Heart right ventricle (tissue), 16 donors: ENCODE measurements at regions of chr17 and their contacts with region 1.

Region 1: DNA sequence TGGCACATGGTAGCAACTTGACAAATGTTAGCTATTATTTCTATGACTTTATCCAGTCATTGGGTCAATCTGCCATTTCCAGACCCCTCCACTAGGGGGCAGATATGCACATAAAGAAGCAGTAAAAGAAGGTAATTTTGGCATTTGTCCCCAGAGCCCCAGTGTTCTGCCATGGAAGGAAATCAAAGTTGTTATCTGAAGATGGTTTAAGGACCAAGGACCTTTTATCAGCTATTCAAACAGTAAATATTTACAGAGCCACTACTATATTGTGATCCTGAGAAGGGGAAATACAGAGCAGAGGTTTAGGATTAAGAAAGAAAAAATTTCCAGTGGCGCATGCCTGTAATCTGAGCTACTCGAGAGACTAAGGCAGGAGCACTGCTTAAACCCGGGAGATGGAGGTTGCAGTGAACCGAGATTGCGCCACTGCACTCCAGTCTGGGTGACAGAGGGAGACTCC is 20.0 kb downstream of the TRAF4 start:
- DNase-seq: peak in 1 of 2 donors; percentile 83
- ATAC-seq: peak in 6 of 8 donors; percentile 25 to 59 (median 37)
- H3K4me3 ChIP-seq: no peak overlapping the region
- H3K27ac ChIP-seq: no peak overlapping the region
- H3K4me1 ChIP-seq: peaks cover 2 to 29% (median 26%) of the 10 kb centered on the region in 9 donors
- H3K27me3 ChIP-seq: no peaks in the 10 kb centered on the region
- CTCF ChIP-seq: peak; percentile 77 to 94 (median 91)

Region 2: GRCh38 chr17:28842282-28843012 is 78.6 kb after region 1 on chr17 and contains the start of gene FAM222B:
- intact Hi-C with region 1: loop called in 4 of 10 experiments (anchors 5 to 10 kb)
- DNase-seq: peak; percentile 83 to 89
- ATAC-seq: peak; percentile 99 to 100 (median 100)
- H3K4me3 ChIP-seq: peak within 1 kb of the TSS; percentile 72 to 96 (median 82)
- H3K27ac ChIP-seq: peak within 1 kb of the TSS; percentile 57 to 91 (median 86)
- H3K4me1 ChIP-seq: peaks cover 0 to 33% (median 15%) of the 10 kb centered on the region in 9 donors
- H3K27me3 ChIP-seq: no peaks in the 10 kb centered on the region
- CTCF ChIP-seq: peak in 1 of 9 donors; percentile 19
- total RNA-seq, gene FAM222B: 13.2 to 19.4 (median 16.0) TPM

Region 3: DNA sequence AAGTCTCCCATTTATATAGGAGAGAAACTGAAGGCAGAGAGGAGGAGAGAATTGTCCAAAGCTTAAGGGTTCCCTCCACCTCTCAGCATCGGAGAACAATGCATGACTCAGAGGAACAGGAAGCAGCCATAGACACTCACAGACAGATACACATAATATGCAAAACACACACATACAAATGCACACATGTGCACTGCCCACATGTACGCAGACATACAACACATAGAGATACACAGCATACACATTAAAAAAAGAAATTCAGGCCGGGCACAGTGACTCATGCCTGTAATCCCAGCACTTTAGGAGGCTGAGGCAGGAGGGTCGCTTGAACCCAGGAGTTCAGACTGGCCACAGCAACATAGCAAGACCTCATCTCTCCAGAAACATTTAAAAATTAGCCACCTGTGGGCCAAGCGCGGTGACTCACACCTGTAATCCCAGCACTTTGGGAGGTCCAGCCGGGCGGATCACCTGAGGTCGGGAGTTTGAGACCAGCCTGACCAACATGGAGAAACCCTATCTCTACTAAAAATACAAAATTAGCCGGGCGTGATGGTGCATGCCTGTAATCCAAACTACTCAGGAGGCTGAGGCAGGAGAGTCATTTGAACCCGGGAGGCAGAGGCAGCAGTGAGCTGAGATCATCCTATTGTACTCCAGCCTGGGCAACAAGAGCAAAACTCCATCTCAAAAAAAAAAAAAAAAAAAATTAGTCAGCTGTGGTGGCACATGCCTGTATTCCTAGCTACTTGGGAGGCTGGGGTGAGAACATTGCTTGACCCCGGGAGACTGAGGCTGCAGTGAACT is 102.3 kb after region 1 on chr17:
- intact Hi-C with region 1: loop called in 1 of 10 experiments (anchors 10 kb)
- DNase-seq: no peak
- ATAC-seq: no peak
- H3K4me3 ChIP-seq: no peak overlapping the region
- H3K27ac ChIP-seq: no peak overlapping the region
- H3K4me1 ChIP-seq: no peaks in the 10 kb centered on the region
- H3K27me3 ChIP-seq: no peaks in the 10 kb centered on the region
- CTCF ChIP-seq: no peak

Region 4: DNA sequence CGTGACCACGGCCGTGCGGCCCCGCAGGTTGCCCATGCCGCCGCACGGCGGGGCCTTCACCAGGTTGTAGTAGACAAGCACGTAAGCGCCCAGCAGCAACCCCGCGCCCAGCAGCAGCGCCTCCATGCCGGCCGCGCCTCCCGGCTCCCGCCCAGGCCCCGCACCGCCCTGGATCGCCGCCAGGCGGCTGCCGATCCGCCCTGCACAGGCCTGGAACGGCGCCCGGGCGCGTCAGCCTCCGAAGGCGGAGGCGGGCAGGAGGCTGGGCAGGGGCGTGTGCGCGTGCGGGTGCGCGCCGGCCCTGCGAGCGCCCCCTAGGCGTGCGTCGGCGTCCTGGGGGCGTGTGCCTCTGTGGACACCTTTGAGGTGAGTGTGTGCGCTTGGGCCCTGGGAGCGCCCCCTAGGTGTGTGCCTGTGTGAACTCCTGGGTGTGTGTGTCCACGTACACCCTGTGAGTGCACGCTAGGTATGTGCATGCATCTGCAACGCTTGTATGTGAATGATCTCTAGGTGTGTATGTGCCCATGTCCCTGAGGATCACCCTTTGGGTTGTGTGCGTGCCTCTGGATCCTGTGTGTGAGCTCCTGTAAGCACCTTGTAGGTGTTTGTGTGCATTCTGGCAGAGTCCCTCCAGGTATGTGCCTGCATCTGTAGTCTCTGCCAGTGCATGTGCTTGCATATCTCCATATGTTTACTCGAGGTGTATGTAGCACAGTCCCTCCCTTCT is 139.1 kb after region 1 on chr17 and contains the start of gene DHRS13:
- intact Hi-C with region 1: loop called in 6 of 10 experiments (anchors 5 to 10 kb)
- DNase-seq: peak; percentile 85 to 93
- ATAC-seq: peak; percentile 89 to 94 (median 92)
- H3K4me3 ChIP-seq: peak within 1 kb of the TSS; percentile 19 to 83 (median 73)
- H3K27ac ChIP-seq: peak within 1 kb of the TSS; percentile 48 to 88 (median 78)
- H3K4me1 ChIP-seq: peaks cover 6 to 49% (median 22%) of the 10 kb centered on the region in 9 donors
- H3K27me3 ChIP-seq: no peaks in the 10 kb centered on the region
- CTCF ChIP-seq: peak; percentile 62 to 94 (median 86)
- total RNA-seq, gene DHRS13: 1.1 to 5.6 (median 2.2) TPM